ENCODE measurements at regions of chr2 and their contacts with region 1.

Region 1: DNA sequence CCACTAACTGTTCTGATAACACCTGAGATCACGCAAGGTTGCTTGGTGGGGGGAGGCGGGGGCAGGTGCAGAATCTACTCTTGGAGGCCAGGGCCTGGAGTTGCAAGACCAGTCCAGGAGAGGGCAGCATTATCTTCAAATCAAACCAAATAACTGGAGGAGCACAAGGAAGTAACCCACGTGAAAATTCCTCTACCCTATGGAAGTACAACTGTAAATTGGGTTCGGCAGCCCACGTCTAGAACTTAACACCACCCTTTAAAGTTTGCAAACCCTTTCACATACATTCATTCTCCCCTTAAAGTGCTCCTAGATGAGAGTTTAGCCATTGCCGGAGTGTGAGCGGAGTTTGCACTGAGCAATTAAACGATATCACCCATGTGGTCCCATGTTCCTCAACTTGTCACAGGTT is 19.6 kb upstream of the CXCR1 start:
- DNase-seq: peak; percentile 83
- ATAC-seq: peak; percentile 95
- H3K4me3 Mint-ChIP-seq: no peak overlapping the region
- H3K27ac Mint-ChIP-seq: no peak overlapping the region
- H3K4me1 Mint-ChIP-seq: peaks cover 8% of the 10 kb centered on the region
- H3K27me3 Mint-ChIP-seq: no peaks in the 10 kb centered on the region

Region 2: GRCh38 chr2:218216674-218217359 is 30.5 kb after region 1 on chr2 and contains the start of gene ARPC2:
- CTCF ChIA-PET with region 1: no interaction called
- POLR2A ChIA-PET with region 1: no interaction called
- intact Hi-C with region 1: loop called in 1 of 2 experiments (anchors 1 kb)
- DNase-seq: peak; percentile 96
- ATAC-seq: peak; percentile 64
- H3K4me3 Mint-ChIP-seq: peak within 1 kb of the TSS; percentile 81
- H3K27ac Mint-ChIP-seq: peak within 1 kb of the TSS; percentile 96
- H3K4me1 Mint-ChIP-seq: peaks cover 34% of the 10 kb centered on the region
- H3K27me3 Mint-ChIP-seq: no peaks in the 10 kb centered on the region
- total RNA-seq, gene ARPC2: 563 to 632 TPM

Region 3: DNA sequence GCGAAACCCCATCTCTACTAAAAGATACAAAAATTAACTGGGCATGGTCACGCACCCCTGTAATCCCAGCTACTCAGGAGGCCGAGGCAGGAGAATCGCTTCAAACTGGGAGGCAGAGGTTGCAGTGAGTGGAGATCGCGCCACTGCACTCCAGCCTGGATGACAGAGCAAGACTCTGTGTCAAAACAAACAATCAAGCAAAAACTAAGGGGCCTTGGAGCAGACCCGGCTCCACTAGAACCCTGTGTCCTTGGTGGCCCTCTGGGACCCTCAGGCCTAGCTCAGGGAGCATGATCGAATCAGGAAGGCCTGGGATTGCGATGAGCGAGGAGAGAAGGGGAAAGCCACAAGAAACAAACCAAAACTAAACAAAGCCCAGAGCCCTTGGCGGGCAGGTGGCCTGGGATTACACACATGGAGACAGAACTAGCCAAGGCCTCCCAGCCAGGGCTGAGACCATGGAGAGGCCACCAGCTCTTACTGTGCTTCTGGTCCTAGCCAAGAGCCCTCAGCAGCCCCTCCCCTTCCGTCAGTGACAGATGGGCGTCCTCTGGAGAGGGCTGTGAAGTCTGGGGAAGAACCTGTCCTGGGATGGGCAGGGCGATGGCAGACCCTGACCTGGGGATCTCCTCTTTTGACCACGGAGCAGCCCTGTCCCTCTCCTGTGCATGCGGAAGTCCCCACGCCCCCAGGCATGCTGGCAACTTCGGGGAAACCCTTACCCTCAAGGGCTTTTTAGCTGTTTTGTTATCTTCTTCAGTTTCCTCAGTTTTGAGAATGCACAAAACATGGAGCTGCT is 142.9 kb after region 1 on chr2:
- CTCF ChIA-PET with region 1: no interaction called
- POLR2A ChIA-PET with region 1: no interaction called
- intact Hi-C with region 1: no loop called
- DNase-seq: no peak
- ATAC-seq: no peak
- H3K4me3 Mint-ChIP-seq: no peak overlapping the region
- H3K27ac Mint-ChIP-seq: no peak overlapping the region
- H3K4me1 Mint-ChIP-seq: peaks cover 18% of the 10 kb centered on the region
- H3K27me3 Mint-ChIP-seq: no peaks in the 10 kb centered on the region

Region 4: DNA sequence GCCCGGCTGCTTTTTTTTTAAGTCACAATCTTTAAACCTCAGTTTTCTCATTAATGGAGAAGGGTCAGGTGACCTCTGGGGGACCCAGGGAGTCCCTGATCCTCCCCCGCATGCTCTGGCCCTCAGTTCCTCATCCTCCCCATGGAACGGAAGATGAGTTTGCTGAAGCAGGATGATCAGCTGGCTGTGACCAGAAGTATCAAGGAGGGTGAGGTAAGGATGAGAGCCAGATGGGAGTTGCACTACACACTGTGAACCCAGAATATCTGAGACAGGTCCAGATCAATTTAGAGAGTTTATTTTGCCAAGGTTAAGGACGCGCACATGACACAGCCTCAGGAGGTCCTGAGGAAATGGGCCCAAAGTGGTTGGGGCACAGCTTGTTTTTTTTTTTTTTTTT is 174.1 kb after region 1 on chr2:
- CTCF ChIA-PET with region 1: no interaction called
- POLR2A ChIA-PET with region 1: no interaction called
- intact Hi-C with region 1: loop called (anchors 5 to 10 kb)
- DNase-seq: no peak
- ATAC-seq: no peak
- H3K4me3 Mint-ChIP-seq: no peak overlapping the region
- H3K27ac Mint-ChIP-seq: no peak overlapping the region
- H3K4me1 Mint-ChIP-seq: no peaks in the 10 kb centered on the region
- H3K27me3 Mint-ChIP-seq: no peaks in the 10 kb centered on the region

Measured in activated CD4-positive, alpha-beta T cell treated with anti-CD3 and anti-CD28 coated beads for 36 hours (primary cell).